ENCODE measurements at regions of chr13 and their contacts with region 1.

Region 1: DNA sequence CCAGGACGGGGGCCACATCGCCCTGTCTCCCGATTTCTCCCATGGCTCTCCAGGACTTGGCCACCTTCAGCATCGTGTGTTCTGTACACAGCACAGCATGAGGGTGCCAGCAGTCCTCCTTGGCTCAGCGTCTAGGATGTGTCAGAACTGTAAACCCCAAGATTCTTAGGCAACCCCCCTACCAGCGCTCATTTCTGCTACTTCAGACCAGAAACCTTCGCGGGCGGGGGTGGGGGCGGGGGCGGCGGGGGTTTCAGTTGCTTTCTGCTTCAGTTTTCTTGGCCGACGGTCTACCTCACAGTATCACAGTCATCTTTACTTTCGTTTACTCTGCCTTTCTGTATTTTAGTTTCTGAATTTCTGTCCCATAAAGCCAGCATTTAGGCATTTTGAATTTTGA is 82.4 kb downstream of the GGACT start:
- DNase-seq: peak; percentile 59
- H3K4me3 Mint-ChIP-seq: peak overlapping the region; percentile 4
- H3K27ac Mint-ChIP-seq: no peak overlapping the region
- H3K4me1 Mint-ChIP-seq: peaks cover 14% of the 10 kb centered on the region
- H3K27me3 Mint-ChIP-seq: peaks cover 8% of the 10 kb centered on the region

Region 2: GRCh38 chr13:99980201-99980823 is 525.8 kb before region 1 on chr13:
- CTCF ChIA-PET with region 1: no interaction called
- intact Hi-C with region 1: loop called (anchors 5 kb)
- DNase-seq: peak; percentile 62
- H3K4me3 Mint-ChIP-seq: peak overlapping the region; percentile 15
- H3K27ac Mint-ChIP-seq: no peak overlapping the region
- H3K4me1 Mint-ChIP-seq: peaks cover 23% of the 10 kb centered on the region
- H3K27me3 Mint-ChIP-seq: peaks cover 69% of the 10 kb centered on the region

Region 3: DNA sequence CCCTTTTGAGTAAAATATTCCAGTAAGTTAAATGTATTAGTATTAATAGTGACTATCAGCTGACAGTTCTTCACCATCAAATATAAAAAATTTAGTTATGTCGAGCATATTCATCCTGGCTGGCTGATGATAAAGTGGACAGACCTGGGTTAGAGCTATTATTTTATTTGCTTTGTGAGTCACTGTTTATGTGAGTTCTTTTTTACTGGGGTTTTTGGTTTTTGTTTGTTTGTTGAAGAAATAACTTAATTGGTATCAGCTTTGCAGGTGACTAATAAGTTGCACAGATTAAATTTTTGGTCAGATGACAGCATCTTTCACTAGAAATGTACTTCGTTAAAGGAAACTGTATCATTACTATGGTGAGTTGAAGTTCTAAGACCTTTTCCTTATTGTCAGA is 142.3 kb before region 1 on chr13:
- CTCF ChIA-PET with region 1: no interaction called
- intact Hi-C with region 1: loop called (anchors 5 kb)
- DNase-seq: no peak
- H3K4me3 Mint-ChIP-seq: no peak overlapping the region
- H3K27ac Mint-ChIP-seq: no peak overlapping the region
- H3K4me1 Mint-ChIP-seq: no peaks in the 10 kb centered on the region
- H3K27me3 Mint-ChIP-seq: no peaks in the 10 kb centered on the region